Activated CD4-positive, alpha-beta memory T cell treated with anti-CD3 and anti-CD28 coated beads for 36 hours (primary cell): ENCODE measurements at regions of chr20 and their contacts with region 1.

Region 1: DNA sequence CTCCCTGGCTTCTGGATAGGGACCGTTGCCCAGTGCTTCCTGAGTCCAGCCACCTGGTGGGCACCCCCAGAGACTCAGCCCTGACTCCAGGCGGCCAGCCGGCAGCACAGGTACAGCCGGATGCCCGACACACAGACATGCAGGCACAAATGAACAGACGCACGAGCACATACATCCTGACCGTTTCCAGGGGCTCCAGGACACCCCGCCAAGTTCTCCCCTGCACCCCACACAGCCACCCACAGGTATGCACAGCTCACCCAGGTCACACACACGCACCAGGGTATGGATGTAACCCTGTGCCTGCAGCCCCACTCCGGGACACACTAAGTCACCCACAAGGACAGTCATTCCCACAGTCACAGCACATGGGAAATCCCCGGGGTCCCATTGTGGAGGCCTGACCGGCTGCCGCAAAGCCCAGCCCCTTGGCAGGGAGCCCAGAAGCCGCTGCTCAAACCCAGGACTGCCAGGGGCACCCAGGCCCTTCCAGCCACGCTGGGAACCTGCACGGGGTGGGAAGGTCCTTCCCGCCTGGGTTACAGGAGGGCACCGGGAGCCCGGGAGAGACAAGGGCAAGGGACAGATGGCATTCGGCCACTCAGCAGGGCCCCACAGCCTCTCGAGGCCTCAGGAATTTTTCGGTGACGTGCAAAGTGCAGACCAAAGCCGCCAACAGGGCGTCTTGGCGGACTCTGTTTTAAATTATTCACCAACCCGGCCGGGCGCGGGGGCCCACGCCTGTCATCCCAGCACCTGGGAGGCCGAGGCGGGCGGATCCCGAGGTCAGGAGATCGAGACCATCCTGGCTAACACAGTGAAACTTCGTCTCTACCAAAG is 10.6 kb upstream of the KCNQ2 start:
- DNase-seq: peak; percentile 33
- H3K4me3 Mint-ChIP-seq: no peak overlapping the region
- H3K27ac Mint-ChIP-seq: no peak overlapping the region
- H3K4me1 Mint-ChIP-seq: peaks cover 1% of the 10 kb centered on the region
- H3K27me3 Mint-ChIP-seq: peaks cover 32% of the 10 kb centered on the region

Region 2: GRCh38 chr20:63409459-63410435 is 73.3 kb before region 1 on chr20:
- CTCF ChIA-PET with region 1: no interaction called
- POLR2A ChIA-PET with region 1: no interaction called
- intact Hi-C with region 1: no loop called
- DNase-seq: no peak
- H3K4me3 Mint-ChIP-seq: no peak overlapping the region
- H3K27ac Mint-ChIP-seq: no peak overlapping the region
- H3K4me1 Mint-ChIP-seq: peaks cover 4% of the 10 kb centered on the region
- H3K27me3 Mint-ChIP-seq: peaks cover 3% of the 10 kb centered on the region

Region 3: DNA sequence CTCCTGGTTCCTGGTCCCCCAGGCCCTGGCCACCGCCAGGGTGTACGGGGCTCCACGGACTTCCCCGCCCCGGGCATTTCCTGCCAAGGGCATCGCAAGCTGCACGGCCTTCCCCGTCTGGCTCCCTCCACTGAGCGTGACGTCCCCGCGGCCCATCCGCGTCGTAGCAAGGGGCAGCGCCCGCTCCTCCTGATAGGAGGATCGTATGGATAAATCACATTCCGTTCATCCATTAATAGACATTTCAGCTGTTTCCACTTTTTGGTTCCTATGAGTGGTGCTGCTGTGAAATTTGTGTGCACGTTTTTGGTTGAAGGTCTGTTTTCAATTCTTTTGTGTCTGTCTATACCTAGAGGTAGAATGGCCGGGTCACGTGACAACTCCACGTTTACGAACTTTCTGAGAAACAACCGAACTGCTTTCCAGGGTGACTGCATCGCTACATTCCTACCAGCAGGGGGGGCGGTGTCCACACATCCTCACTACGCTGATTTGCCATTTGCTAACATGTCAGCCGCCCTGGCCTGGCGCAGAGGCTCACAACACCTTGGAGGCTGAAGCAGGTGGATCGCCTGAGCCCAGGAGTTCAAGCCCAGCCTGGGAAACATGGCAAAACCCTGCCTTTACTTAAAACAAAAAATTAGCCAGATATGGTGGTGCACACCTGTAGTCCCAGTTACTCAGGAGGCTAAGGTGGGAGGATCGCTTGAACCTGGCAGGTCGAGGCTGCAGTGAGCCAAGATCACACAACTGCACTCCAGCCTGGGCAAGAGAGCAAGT is 48.3 kb before region 1 on chr20:
- CTCF ChIA-PET with region 1: no interaction called
- POLR2A ChIA-PET with region 1: no interaction called
- intact Hi-C with region 1: loop called (anchors 1 kb)
- DNase-seq: peak; percentile 88
- H3K4me3 Mint-ChIP-seq: peak overlapping the region; percentile 20
- H3K27ac Mint-ChIP-seq: peak overlapping the region; percentile 24
- H3K4me1 Mint-ChIP-seq: peaks cover 4% of the 10 kb centered on the region
- H3K27me3 Mint-ChIP-seq: peaks cover 8% of the 10 kb centered on the region

Region 4: DNA sequence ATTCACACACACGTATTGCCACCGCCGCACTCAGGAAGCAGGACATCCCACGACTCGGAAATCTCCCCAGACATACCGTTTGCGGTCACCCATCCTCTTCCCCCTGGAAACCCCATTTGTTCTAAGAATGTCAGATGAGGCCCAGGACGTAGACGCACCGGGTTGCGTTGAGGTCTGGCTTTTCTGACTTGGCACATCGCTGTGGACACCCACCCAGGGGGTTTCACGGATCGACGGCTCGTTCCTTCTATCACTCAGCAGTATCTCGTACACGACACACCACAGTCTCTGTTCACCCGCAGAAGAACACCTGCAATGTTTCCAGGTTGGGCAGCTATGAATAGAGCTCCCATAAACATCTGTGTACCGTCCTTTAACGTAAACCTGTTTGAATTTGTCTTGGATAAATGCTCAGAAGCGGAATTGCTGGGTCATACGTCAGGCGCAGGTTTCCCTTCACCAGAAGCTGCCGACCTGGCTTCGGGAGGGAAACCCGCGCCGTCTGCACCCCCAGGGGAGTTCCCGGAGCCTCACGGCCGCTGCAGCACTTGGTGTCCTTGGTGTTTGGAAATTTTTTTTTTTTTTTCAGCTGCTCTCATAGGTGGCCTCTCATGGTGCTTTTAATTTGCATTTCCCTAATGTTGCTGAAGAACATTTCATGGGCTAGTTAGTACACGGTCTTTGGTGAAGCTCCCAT is 25.1 kb after region 1 on chr20:
- CTCF ChIA-PET with region 1: no interaction called
- POLR2A ChIA-PET with region 1: no interaction called
- intact Hi-C with region 1: no loop called
- DNase-seq: peak; percentile 42
- H3K4me3 Mint-ChIP-seq: no peak overlapping the region
- H3K27ac Mint-ChIP-seq: peak overlapping the region; percentile 47
- H3K4me1 Mint-ChIP-seq: peaks cover 4% of the 10 kb centered on the region
- H3K27me3 Mint-ChIP-seq: peaks cover 47% of the 10 kb centered on the region